ENCODE measurements at regions of chr13 and their contacts with region 1.

Region 1: DNA sequence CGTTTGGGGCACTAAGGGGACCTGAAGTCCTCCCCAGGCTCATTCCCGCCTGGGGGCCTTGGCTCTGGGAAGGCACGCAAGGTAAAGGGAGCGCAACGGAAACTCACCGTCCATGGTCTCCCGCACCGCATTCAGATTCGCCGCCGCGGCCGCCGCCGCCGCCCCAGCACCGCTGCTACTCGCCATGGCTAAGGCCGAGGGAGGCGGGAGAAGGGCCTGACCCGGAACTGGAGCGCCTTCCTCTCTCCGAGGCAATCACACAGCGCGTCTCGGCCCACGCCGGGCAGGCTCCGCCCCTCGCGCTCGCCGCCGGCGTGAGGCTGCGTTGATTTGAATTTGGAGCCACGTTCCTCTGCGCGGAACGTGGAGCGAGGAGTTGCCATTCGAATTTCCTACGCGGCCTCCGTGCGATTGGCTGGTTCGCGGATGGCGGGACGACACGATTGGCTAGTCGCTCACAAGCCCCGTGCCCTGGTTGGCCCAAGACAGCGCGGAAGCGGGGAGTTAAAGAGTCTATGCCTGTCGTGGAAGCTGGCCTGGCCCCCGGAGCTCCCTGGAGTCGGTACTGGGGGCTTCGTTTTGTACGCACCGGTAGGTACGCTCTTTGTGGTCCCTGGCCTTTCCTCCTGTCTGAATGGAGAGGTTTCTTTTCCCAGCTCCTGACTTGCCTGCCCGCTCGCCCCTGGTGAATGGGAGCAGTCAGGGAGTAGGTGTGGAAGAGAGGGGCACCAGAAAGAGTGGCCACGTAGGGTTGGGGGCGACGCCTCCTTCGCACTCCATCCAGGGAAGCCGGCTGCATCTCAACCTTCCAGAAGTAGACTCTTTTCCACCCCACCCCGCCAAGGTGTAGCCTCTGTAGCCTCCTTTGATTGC is at the starts of genes BORA and MZT1:
- DNase-seq: peak; percentile 95
- ATAC-seq: peak; percentile 94
- H3K4me3 ChIP-seq: peak within 1 kb of the TSS; percentile 63 to 91
- H3K27ac ChIP-seq: peak within 1 kb of the TSS; percentile 82
- H3K4me1 ChIP-seq: peaks cover 8 to 24% of the 10 kb centered on the region in 2 experiments
- H3K27me3 ChIP-seq: no peaks in the 10 kb centered on the region
- CTCF ChIP-seq: no peak
- POLR2A ChIP-seq: no peak
- RAD21 ChIP-seq: no peak
- total RNA-seq, gene BORA: 27.6 TPM
- total RNA-seq, gene MZT1: 19.0 TPM

Region 2: GRCh38 chr13:72781451-72782439 is 54.1 kb after region 1 on chr13 and contains the starts of genes DIS3 and PIBF1:
- CTCF ChIA-PET with region 1: no interaction called
- POLR2A ChIA-PET with region 1: no interaction called
- RAD21 ChIA-PET with region 1: no interaction called
- intact Hi-C with region 1: loop called (anchors 5 kb)
- DNase-seq: peak; percentile 96
- ATAC-seq: peak; percentile 96
- H3K4me3 ChIP-seq: peak within 1 kb of the TSS; percentile 88 to 94
- H3K27ac ChIP-seq: peak within 1 kb of the TSS; percentile 82
- H3K4me1 ChIP-seq: peaks cover 5 to 14% of the 10 kb centered on the region in 2 experiments
- H3K27me3 ChIP-seq: no peaks in the 10 kb centered on the region
- CTCF ChIP-seq: peak in 1 of 3 experiments; percentile 29; a peak in 1 of 6 replicates
- POLR2A ChIP-seq: peak; percentile 83
- RAD21 ChIP-seq: no peak
- total RNA-seq, gene DIS3: 44.2 TPM
- total RNA-seq, gene PIBF1: 21.1 TPM

Region 3: GRCh38 chr13:74133657-74134201 is 1406.1 kb after region 1 on chr13:
- CTCF ChIA-PET with region 1: no interaction called
- POLR2A ChIA-PET with region 1: no interaction called
- RAD21 ChIA-PET with region 1: no interaction called
- intact Hi-C with region 1: loop called (anchors 5 kb)
- DNase-seq: peak; percentile 29
- ATAC-seq: peak; percentile 45
- H3K4me3 ChIP-seq: peak overlapping the region; percentile 56 to 68
- H3K27ac ChIP-seq: peak overlapping the region; percentile 49
- H3K4me1 ChIP-seq: peaks cover 21 to 33% of the 10 kb centered on the region in 2 experiments
- H3K27me3 ChIP-seq: no peaks in the 10 kb centered on the region
- CTCF ChIP-seq: no peak
- POLR2A ChIP-seq: no peak
- RAD21 ChIP-seq: no peak

Measured in HCT116 (cell line).